WTC11 (cell line): ENCODE measurements at regions of chr13 and their contacts with region 1.

Region 1: DNA sequence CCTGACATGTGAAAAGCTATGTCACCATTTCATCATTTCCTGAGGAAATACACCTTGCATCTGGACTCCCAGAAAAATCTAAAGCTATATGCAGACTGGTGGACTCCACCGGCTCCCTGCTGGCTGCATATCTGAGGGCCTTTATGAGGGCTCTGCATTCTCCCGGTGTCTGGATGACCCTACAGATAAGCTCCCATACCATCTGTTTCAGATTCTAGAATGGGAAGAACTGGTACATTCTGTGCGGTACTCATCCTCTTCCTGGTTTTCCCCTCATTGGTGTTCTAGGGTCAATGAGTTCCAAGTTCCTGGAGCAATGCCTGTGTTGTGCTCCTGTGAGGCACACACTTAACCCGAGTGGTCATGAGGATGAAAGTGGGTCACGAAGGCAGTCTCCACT is 60.4 kb downstream of the COL4A1 start:
- DNase-seq: no peak
- ATAC-seq: no peak
- H3K4me3 Mint-ChIP-seq: no peak overlapping the region
- H3K27ac Mint-ChIP-seq: no peak overlapping the region
- H3K4me1 Mint-ChIP-seq: peaks cover 28% of the 10 kb centered on the region
- H3K27me3 Mint-ChIP-seq: no peaks in the 10 kb centered on the region
- CTCF ChIP-seq: no peak

Region 2: GRCh38 chr13:110221406-110221805 is 25.1 kb before region 1 on chr13:
- CTCF ChIA-PET with region 1: interaction called, 12 read pairs
- POLR2A ChIA-PET with region 1: no interaction called
- DNase-seq: no peak
- ATAC-seq: no peak
- H3K4me3 Mint-ChIP-seq: no peak overlapping the region
- H3K27ac Mint-ChIP-seq: peak overlapping the region; percentile 15
- H3K4me1 Mint-ChIP-seq: peaks cover 3% of the 10 kb centered on the region; the same call in 1 of the 2 replicates
- H3K27me3 Mint-ChIP-seq: no peaks in the 10 kb centered on the region
- CTCF ChIP-seq: no peak

Region 3: DNA sequence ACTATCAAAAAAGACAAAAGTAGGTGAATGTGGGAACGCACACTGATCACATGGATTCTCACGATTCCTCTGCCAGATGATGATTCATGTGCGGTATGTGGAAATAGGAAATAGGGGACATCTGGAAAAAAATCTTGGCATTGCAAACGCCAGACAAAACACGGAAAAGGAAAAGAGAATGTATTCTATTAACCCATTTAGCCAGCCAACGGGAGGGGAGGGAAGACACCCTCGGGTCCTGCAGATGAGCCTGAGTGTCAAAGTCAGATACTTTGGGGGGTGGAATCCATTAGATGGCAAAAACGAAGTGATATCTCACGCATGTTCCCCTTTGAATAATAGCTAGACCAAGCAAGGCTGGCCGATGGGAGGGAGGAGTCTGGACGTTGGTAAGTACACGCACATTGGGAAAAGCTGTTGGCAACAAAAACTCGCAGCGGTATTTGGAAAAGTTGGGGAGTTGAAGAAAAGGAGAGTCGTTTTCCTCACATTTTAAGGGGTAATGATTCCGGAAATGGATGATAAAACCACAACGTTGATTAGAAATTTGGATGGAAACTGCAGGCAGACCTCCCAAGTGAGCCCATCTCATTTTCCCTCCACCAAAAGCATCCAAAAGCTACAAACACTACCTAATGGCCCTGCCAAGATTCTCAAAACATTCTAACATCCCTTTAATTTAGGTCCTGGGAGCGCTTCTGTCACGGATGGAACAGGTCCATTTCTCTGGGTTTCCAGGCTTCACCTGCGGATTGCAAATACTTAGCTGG is 13.2 kb before region 1 on chr13:
- CTCF ChIA-PET with region 1: interaction called, 13 read pairs
- POLR2A ChIA-PET with region 1: interaction called, 3 read pairs
- DNase-seq: no peak
- ATAC-seq: no peak
- H3K4me3 Mint-ChIP-seq: no peak overlapping the region
- H3K27ac Mint-ChIP-seq: no peak overlapping the region
- H3K4me1 Mint-ChIP-seq: peaks cover 18% of the 10 kb centered on the region
- H3K27me3 Mint-ChIP-seq: no peaks in the 10 kb centered on the region
- CTCF ChIP-seq: no peak

Region 4: DNA sequence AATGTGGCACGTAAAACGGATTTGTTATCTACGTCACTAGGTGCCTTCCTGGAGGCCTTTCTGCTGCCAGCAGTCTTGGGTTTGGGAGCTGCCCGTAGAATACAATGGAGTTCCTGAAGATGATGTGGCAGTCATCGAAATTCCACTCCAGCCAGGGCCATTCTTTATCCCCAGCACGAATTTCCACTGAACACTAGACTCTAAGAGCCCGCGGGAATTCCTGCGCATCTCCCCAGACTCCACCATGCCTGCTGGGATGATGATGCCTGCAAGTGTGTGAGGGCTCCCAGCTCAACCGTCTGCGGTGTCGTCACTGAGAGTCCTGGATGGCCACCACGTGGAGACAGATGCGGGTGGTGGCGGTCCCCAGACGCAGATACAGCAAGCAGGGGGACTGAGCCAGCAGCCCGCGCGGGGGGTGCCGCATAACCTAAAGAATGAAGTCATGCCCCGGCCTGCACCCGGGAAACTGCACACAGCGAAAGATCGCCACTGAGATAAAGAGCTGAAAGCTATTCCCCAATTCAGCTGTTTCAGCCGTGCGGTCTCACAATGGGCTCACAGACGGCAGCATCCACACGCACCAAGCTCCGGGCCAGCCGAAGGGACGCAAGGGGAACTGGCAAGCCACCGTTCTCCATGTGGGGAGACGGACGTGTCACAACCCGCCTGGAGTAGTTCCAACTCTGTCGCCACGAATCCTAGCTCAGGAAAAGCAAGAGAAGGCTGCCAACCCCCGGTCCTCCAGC is 19.3 kb after region 1 on chr13:
- CTCF ChIA-PET with region 1: interaction called, 29 read pairs
- POLR2A ChIA-PET with region 1: no interaction called
- DNase-seq: no peak
- ATAC-seq: no peak
- H3K4me3 Mint-ChIP-seq: no peak overlapping the region
- H3K27ac Mint-ChIP-seq: 0 out of 2 replicates have a peak overlapping the region, but pooled peaks have one; percentile 19
- H3K4me1 Mint-ChIP-seq: peaks cover 58% of the 10 kb centered on the region
- H3K27me3 Mint-ChIP-seq: no peaks in the 10 kb centered on the region
- CTCF ChIP-seq: no peak

Region 5: DNA sequence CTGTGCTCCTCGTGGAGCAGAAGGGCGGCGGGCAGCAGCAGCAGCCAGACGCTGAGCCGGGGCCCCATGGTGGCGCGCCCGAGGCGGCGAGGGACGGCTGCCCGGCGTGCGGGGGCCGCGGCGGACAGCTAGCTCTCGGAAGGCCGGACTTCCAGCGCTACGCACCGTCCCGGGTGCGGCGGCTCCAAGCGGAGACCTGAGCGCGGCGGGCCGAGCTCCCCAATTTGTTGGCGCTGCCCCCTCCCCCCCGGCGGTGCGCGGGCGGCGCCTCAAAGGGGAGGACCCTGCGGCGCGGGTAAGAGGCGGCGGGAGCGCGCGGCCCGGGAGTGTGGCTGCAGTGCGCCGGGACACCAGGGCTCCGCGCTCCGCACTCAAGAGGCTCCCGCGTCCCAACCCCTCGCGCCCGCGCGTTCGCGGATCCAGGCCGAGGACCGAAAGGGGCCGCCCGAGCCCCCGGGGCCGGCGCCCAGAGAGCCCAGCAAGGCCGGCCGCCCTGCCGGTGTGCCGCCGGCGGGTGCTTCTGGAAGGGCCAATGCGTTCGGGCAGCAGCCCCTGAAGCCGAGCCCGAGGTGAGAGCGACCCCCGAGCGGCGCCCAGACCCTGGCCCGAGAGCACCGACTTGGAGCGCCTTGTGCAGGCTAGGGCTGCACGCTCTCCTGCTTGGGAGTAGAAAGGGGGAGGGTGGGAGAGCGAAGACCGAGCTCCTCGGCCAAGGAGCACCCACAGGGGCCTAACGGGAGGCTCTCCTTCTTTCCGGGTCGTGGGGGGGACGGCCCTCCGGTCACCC is 60.6 kb after region 1 on chr13 and contains the starts of genes COL4A1 and COL4A2:
- CTCF ChIA-PET with region 1: interaction called, 11 read pairs
- POLR2A ChIA-PET with region 1: no interaction called
- DNase-seq: peak; percentile 76
- ATAC-seq: peak; percentile 51
- H3K4me3 Mint-ChIP-seq: peak within 1 kb of the TSS; percentile 88
- H3K27ac Mint-ChIP-seq: no peak within 1 kb of the TSS
- H3K4me1 Mint-ChIP-seq: peaks cover 34% of the 10 kb centered on the region
- H3K27me3 Mint-ChIP-seq: peaks cover 35% of the 10 kb centered on the region
- CTCF ChIP-seq: no peak
- total RNA-seq, gene COL4A1: 75.0 to 89.6 TPM (median 82.3 TPM) in 3 replicates
- total RNA-seq, gene COL4A2: 102 to 109 TPM (median 106 TPM) in 3 replicates

Region 6: GRCh38 chr13:110412132-110412914 is 165.8 kb after region 1 on chr13:
- CTCF ChIA-PET with region 1: interaction called, 14 read pairs
- POLR2A ChIA-PET with region 1: no interaction called
- DNase-seq: peak; percentile 75
- ATAC-seq: peak; percentile 80
- H3K4me3 Mint-ChIP-seq: no peak overlapping the region
- H3K27ac Mint-ChIP-seq: peak overlapping the region; percentile 47; the same call in 1 of the 2 replicates
- H3K4me1 Mint-ChIP-seq: peaks cover 18% of the 10 kb centered on the region
- H3K27me3 Mint-ChIP-seq: no peaks in the 10 kb centered on the region; the same call in 1 of the 2 replicates
- CTCF ChIP-seq: peak; percentile 82